T-cell (primary cell): ENCODE measurements at regions of chr11 and their contacts with region 1.

Region 1: GRCh38 chr11:9137293-9138132 is 46.1 kb upstream of the SCUBE2 start:
- DNase-seq: peak; percentile 7 to 72 (median 48)
- ATAC-seq: peak; percentile 89 to 93 (median 92)
- H3K4me3 ChIP-seq: no peak overlapping the region
- H3K4me3 Mint-ChIP-seq: no peak overlapping the region
- H3K27ac ChIP-seq: no peak overlapping the region
- H3K27ac Mint-ChIP-seq: peak overlapping the region; percentile 39 to 65
- H3K4me1 ChIP-seq: peaks cover 3 to 5% of the 10 kb centered on the region in 2 experiments
- H3K4me1 Mint-ChIP-seq: peaks cover 16 to 41% (median 37%) of the 10 kb centered on the region in 3 donors
- H3K27me3 ChIP-seq: no peaks in the 10 kb centered on the region
- H3K27me3 Mint-ChIP-seq: no peaks in the 10 kb centered on the region

Region 2: DNA sequence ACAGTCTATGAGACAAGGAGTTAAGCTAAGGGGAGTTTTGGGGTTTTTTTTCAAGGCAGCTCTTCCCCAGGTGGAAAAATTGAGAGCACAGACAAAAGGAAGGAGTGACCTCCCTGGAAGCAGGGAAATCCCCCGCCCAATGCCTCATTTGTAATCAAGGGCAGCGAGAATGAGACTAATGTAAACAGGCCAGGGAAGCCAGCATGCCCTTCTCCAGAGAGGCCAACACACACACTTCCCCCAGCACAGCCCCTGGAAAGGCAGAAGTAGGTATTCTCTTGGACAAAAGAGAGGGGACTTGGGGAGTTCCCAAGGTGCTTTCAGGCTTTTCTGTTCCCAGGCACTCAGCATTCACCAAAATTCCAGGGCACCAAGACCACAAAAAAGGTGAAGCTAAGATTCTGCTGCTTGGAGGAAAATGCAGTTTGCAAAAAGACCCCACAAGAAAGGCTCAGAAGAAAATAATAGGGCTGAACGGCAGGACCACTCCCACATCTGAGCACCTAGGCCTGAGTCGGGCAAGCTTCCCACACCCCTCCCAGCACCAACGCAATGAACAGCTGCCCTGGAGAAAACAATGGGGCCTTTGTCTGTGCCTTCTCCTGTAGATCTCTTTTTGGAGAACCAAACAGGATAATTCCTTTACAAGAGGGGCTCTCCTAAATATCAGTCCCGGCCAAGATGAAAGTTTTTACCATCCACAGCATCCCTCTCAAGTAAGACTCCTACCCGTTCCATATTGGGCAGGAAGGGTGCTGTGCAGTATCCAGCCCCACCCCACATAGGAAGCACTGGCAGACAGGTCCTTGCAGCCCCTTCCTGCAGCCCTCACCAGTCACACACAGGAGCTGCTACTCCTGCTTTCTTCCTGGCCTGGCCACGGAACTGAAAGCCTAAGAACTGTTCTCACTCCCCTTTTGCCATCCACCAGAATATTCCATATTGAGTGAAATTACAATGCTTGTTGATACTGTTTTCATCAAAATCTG is 297.3 kb before region 1 on chr11:
- CTCF ChIA-PET with region 1: no interaction called
- POLR2A ChIA-PET with region 1: no interaction called
- DNase-seq: no peak
- ATAC-seq: no peak
- H3K4me3 ChIP-seq: no peak overlapping the region
- H3K4me3 Mint-ChIP-seq: no peak overlapping the region
- H3K27ac ChIP-seq: no peak overlapping the region
- H3K27ac Mint-ChIP-seq: no peak overlapping the region
- H3K4me1 ChIP-seq: no peaks in the 10 kb centered on the region
- H3K4me1 Mint-ChIP-seq: no peaks in the 10 kb centered on the region
- H3K27me3 ChIP-seq: peaks cover 0 to 28% of the 10 kb centered on the region in 2 experiments
- H3K27me3 Mint-ChIP-seq: peaks cover 26 to 27% of the 10 kb centered on the region in 2 donors

Region 3: DNA sequence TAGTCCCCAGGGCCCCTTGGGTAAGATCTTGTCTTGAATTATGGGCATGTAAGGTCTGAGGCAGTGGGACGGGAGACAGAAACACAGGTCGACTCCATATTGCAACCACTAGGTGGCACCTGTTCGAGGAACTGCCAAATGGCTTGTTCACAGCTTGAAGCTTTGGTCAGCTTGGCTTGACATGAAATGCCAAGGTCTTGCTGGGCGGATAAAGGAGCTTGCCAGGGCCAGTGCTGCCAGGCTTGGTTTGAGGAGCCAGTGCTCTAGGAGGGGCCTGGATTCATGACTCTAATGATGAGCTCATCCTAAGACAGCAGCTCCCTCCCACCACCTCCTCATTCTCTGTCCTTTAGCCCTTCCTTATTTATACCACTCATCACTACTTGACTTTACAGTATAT is 121.8 kb before region 1 on chr11:
- CTCF ChIA-PET with region 1: interaction called, 8 to 38 read pairs
- POLR2A ChIA-PET with region 1: no interaction called
- DNase-seq: peak; percentile 14 to 77 (median 38)
- ATAC-seq: peak; percentile 72 to 86 (median 78)
- H3K4me3 ChIP-seq: no peak overlapping the region
- H3K4me3 Mint-ChIP-seq: no peak overlapping the region
- H3K27ac ChIP-seq: no peak overlapping the region
- H3K27ac Mint-ChIP-seq: no peak overlapping the region
- H3K4me1 ChIP-seq: peaks cover 0 to 11% of the 10 kb centered on the region in 2 experiments
- H3K4me1 Mint-ChIP-seq: peaks cover 17 to 25% (median 17%) of the 10 kb centered on the region in 3 donors
- H3K27me3 ChIP-seq: peaks cover 0 to 8% of the 10 kb centered on the region in 2 experiments
- H3K27me3 Mint-ChIP-seq: peaks cover 5 to 10% of the 10 kb centered on the region in 2 donors

Region 4: GRCh38 chr11:9179141-9179540 is 41.6 kb after region 1 on chr11:
- CTCF ChIA-PET with region 1: no interaction called
- POLR2A ChIA-PET with region 1: no interaction called
- DNase-seq: no peak
- ATAC-seq: no peak
- H3K4me3 ChIP-seq: no peak overlapping the region
- H3K4me3 Mint-ChIP-seq: no peak overlapping the region
- H3K27ac ChIP-seq: no peak overlapping the region
- H3K27ac Mint-ChIP-seq: no peak overlapping the region
- H3K4me1 ChIP-seq: no peaks in the 10 kb centered on the region
- H3K4me1 Mint-ChIP-seq: no peaks in the 10 kb centered on the region
- H3K27me3 ChIP-seq: no peaks in the 10 kb centered on the region
- H3K27me3 Mint-ChIP-seq: no peaks in the 10 kb centered on the region

Region 5: DNA sequence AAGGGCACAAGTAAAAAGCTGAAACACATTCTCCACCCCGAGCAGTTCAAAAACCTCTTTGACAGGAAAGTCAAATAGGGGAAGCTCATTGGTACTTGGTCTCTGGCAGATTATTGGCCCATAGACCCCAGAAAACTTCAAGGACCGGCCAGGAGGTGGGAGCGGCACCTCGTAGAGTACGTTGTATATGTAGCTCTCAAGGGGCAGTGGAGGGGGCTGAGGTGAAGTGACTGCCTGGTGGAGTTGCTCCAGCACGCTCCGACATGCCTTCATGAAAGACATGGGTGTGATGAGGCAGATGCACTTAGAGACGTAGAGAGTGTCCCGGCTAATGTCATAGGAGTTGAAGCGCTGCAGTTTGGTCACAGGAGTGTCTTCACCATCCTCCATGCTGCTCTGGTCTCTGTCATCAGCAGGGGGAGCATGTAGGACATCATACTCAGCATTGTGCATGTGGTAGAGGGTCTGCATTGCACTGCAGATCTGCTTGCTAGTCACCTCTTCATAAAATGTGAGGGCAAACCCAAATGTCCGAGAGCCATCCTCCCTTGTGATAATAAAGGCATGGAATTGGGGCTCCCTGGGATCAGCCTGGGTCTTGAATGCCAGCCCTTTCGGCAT is 66.3 kb after region 1 on chr11:
- CTCF ChIA-PET with region 1: no interaction called
- POLR2A ChIA-PET with region 1: no interaction called
- DNase-seq: peak in 22 of 35 experiments; percentile 3 to 55 (median 12)
- ATAC-seq: peak; percentile 60 to 77 (median 68)
- H3K4me3 ChIP-seq: no peak overlapping the region
- H3K4me3 Mint-ChIP-seq: no peak overlapping the region
- H3K27ac ChIP-seq: no peak overlapping the region
- H3K27ac Mint-ChIP-seq: no peak overlapping the region
- H3K4me1 ChIP-seq: no peaks in the 10 kb centered on the region
- H3K4me1 Mint-ChIP-seq: peaks cover 21 to 30% (median 22%) of the 10 kb centered on the region in 3 donors
- H3K27me3 ChIP-seq: no peaks in the 10 kb centered on the region
- H3K27me3 Mint-ChIP-seq: no peaks in the 10 kb centered on the region